HEK293 (cell line): ENCODE measurements at regions of chr3 and their contacts with region 1.

Region 1: GRCh38 chr3:61894988-61895935 is 333.9 kb downstream of the PTPRG start:
- H3K4me3 ChIP-seq: no peak overlapping the region
- H3K27ac ChIP-seq: peak overlapping the region; percentile 65
- H3K4me1 ChIP-seq: peaks cover 17% of the 10 kb centered on the region
- CTCF ChIP-seq: no peak

Region 2: DNA sequence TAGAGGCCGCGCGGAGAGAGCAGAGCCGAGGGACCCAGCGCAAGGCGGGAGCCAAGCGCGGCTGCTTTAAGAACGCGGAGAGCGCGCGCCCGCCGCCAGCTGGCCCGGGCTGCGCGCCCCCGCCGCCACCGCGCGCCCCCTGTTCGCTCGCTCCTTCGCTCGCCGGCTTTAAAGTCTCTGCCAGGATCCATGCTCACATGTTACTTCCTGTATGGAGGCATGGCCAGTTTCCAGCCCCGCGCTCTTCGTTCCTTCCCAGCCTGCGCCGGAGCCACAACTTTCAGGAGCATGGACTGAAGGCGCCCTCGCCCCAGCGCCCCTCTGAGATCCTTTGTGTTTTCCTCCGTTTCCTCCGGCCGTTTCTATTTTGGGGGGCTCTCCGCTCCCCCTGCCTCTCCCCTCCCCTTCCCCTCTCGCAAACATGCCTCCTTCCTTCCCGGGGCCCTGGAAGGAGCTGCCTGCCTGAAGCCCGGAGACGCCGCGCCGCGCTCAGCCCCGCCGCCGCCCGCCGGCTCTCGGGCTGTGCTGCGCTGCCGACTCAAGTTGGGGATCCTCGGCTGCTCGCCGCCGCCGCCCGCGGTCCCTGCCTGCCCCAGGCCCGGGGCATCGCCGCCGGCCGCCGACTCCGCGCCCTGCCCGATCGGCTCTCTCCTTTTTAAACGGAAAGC is 333.8 kb before region 1 on chr3 and contains the start of gene PTPRG:
- CTCF ChIA-PET with region 1: interaction called, 3 read pairs
- POLR2A ChIA-PET with region 1: interaction called, 15 read pairs
- H3K4me3 ChIP-seq: peak within 1 kb of the TSS; percentile 85
- H3K27ac ChIP-seq: peak within 1 kb of the TSS; percentile 98
- H3K4me1 ChIP-seq: no peaks in the 10 kb centered on the region; the same call in 1 of the 2 replicates
- CTCF ChIP-seq: no peak; the same call in 1 of the 2 replicates